CD4-positive, alpha-beta T cell (primary cell): ENCODE measurements at regions of chr1 and their contacts with region 1.

Region 1: GRCh38 chr1:62407405-62408009 is 29.3 kb upstream of the USP1 start:
- DNase-seq: peak in 5 of 14 experiments; percentile 5 to 73 (median 45)
- ATAC-seq: peak; percentile 46
- H3K4me3 ChIP-seq: no peak overlapping the region
- H3K4me3 Mint-ChIP-seq: no peak overlapping the region
- H3K27ac ChIP-seq: no peak overlapping the region
- H3K27ac Mint-ChIP-seq: no peak overlapping the region
- H3K4me1 ChIP-seq: no peaks in the 10 kb centered on the region
- H3K4me1 Mint-ChIP-seq: no peaks in the 10 kb centered on the region
- H3K27me3 ChIP-seq: no peaks in the 10 kb centered on the region
- H3K27me3 Mint-ChIP-seq: no peaks in the 10 kb centered on the region
- CTCF ChIP-seq: peak; percentile 96

Region 2: GRCh38 chr1:62082456-62083363 is 324.8 kb before region 1 on chr1:
- CTCF ChIA-PET with region 1: no interaction called
- POLR2A ChIA-PET with region 1: no interaction called
- intact Hi-C with region 1: loop called (anchors 2 kb)
- DNase-seq: peak in 12 of 14 experiments; percentile 4 to 53 (median 16)
- ATAC-seq: peak; percentile 54
- H3K4me3 ChIP-seq: no peak overlapping the region
- H3K4me3 Mint-ChIP-seq: no peak overlapping the region
- H3K27ac ChIP-seq: no peak overlapping the region
- H3K27ac Mint-ChIP-seq: no peak overlapping the region
- H3K4me1 ChIP-seq: no peaks in the 10 kb centered on the region
- H3K4me1 Mint-ChIP-seq: no peaks in the 10 kb centered on the region
- H3K27me3 ChIP-seq: no peaks in the 10 kb centered on the region
- H3K27me3 Mint-ChIP-seq: no peaks in the 10 kb centered on the region
- CTCF ChIP-seq: peak; percentile 95

Region 3: GRCh38 chr1:62175568-62176179 is 231.8 kb before region 1 on chr1:
- CTCF ChIA-PET with region 1: interaction called, 10 read pairs
- POLR2A ChIA-PET with region 1: interaction called, 3 read pairs
- intact Hi-C with region 1: loop called (anchors 1 kb)
- DNase-seq: peak in 12 of 14 experiments; percentile 2 to 69 (median 18)
- ATAC-seq: peak; percentile 41
- H3K4me3 ChIP-seq: no peak overlapping the region
- H3K4me3 Mint-ChIP-seq: no peak overlapping the region
- H3K27ac ChIP-seq: no peak overlapping the region
- H3K27ac Mint-ChIP-seq: no peak overlapping the region
- H3K4me1 ChIP-seq: no peaks in the 10 kb centered on the region
- H3K4me1 Mint-ChIP-seq: no peaks in the 10 kb centered on the region
- H3K27me3 ChIP-seq: no peaks in the 10 kb centered on the region
- H3K27me3 Mint-ChIP-seq: peaks cover 7% of the 10 kb centered on the region
- CTCF ChIP-seq: peak; percentile 76

Region 4: DNA sequence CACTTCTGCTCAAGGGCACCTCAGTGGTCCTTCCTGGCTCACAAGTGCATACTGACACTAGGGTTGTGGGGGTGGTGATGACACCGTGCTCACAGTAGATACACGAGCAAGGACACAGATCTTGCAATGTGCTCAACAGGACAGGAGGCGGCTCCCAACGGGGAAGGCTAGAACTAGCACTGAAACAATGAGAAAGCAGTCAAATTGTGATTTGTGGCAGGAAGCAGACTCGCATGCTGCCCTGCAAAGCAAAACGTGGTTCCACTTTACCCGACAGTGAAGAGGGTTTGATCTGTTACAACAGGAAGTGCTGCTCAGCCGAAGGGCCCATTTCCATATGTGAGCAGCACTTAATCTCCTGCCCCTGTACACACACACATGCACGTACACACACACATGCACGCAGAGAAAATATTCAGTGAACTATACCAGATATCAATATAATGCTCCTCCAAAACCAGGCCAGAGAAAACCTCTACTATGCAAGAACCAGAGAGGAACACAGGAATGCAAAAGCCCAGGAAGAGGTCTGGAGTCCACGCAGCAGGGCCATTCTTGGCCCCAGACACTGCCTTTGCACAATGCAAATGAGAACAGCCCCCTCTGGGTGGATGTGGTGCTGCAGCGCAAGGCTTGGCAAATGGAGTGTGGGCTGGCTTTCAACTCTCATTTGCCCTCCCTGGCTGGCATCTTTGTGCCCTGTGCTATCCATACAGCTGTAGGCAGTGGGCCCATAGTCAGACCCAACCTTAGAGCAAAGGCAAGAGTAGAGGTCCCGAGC is 135.4 kb before region 1 on chr1:
- CTCF ChIA-PET with region 1: no interaction called
- POLR2A ChIA-PET with region 1: no interaction called
- intact Hi-C with region 1: loop called in 1 of 2 experiments (anchors 1 kb)
- DNase-seq: peak; percentile 11 to 71 (median 48)
- ATAC-seq: peak; percentile 90
- H3K4me3 ChIP-seq: no peak overlapping the region
- H3K4me3 Mint-ChIP-seq: peak overlapping the region; percentile 47
- H3K27ac ChIP-seq: peak overlapping the region; percentile 31 to 69
- H3K27ac Mint-ChIP-seq: peak overlapping the region; percentile 87
- H3K4me1 ChIP-seq: peaks cover 27% of the 10 kb centered on the region
- H3K4me1 Mint-ChIP-seq: peaks cover 37% of the 10 kb centered on the region
- H3K27me3 ChIP-seq: no peaks in the 10 kb centered on the region
- H3K27me3 Mint-ChIP-seq: no peaks in the 10 kb centered on the region
- CTCF ChIP-seq: no peak

Region 5: DNA sequence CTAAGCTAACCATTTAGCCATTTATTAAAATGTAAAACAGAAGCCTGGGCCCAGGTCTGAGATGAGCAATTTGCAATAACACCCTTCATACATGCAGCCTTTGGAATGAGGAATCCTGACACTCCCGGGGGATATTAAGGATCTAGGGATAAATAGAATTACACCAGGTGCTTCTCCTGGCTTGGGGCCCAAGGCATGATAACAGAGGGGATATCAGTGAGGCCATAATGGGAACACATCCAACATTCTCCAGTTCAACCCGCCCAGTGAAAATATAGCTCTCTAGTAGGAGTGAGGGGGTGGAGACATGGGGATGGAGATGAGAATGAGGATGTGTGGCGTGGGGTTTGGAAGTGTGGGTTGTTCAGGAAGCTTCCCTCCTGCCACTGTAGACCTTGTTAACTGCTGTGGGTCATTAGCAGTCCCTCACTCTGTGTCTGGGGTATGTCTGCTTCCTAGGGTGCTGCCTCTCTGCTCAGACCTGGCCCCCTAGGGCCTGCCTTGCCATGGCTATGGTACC is 30.4 kb before region 1 on chr1:
- CTCF ChIA-PET with region 1: no interaction called
- POLR2A ChIA-PET with region 1: no interaction called
- intact Hi-C with region 1: no loop called
- DNase-seq: no peak
- ATAC-seq: no peak
- H3K4me3 ChIP-seq: no peak overlapping the region
- H3K4me3 Mint-ChIP-seq: no peak overlapping the region
- H3K27ac ChIP-seq: no peak overlapping the region
- H3K27ac Mint-ChIP-seq: no peak overlapping the region
- H3K4me1 ChIP-seq: no peaks in the 10 kb centered on the region
- H3K4me1 Mint-ChIP-seq: no peaks in the 10 kb centered on the region
- H3K27me3 ChIP-seq: no peaks in the 10 kb centered on the region
- H3K27me3 Mint-ChIP-seq: no peaks in the 10 kb centered on the region
- CTCF ChIP-seq: no peak